Calu3 (cell line): ENCODE measurements at regions of chr12 and their contacts with region 1.

Region 1: DNA sequence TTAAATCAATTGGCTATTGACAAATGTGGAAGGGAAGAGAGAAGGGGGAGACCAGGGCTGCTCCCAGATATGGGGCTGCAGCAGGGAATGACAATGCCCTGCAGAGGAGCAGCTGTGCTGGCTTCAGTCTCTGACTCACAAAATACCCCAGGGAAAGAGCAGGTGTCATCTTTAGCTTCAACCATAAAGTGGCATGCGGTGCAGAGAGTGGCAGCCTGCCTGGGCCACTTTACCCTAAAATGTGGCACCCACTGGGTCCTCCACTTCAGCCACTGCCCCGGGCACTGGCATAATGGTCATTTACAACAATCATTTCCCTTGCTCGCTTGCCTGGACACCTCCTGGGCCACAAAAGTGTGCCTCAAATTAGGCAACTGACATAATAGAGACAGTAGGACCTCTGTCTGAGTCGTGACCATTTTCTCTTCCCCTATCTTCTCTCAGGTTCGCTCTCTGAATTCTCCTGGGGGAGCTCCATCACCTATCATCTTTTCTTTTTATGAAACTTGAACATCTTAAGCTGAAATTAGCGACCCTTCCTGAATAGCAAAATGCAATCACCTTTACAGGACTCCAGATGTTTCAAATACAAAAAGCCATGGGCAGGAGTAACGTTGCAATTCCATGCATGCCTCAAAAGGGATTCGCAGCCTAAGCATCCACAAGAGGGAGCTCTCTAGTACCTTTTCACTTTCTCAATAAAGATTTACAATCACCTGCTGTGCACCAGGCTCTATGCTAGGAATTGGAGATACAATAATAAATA is 179.9 kb upstream of the ATF7IP start:
- DNase-seq: peak; percentile 47
- H3K4me3 Mint-ChIP-seq: no peak overlapping the region
- H3K27ac Mint-ChIP-seq: no peak overlapping the region
- H3K4me1 Mint-ChIP-seq: peaks cover 28% of the 10 kb centered on the region
- H3K27me3 Mint-ChIP-seq: no peaks in the 10 kb centered on the region
- CTCF ChIP-seq: peak; percentile 44

Region 2: GRCh38 chr12:14126692-14127091 is 58.9 kb before region 1 on chr12:
- CTCF ChIA-PET with region 1: no interaction called
- intact Hi-C with region 1: no loop called
- DNase-seq: no peak
- H3K4me3 Mint-ChIP-seq: no peak overlapping the region
- H3K27ac Mint-ChIP-seq: no peak overlapping the region
- H3K4me1 Mint-ChIP-seq: no peaks in the 10 kb centered on the region
- H3K27me3 Mint-ChIP-seq: peaks cover 39% of the 10 kb centered on the region
- CTCF ChIP-seq: no peak

Region 3: GRCh38 chr12:14207905-14208551 is 22.4 kb after region 1 on chr12:
- CTCF ChIA-PET with region 1: interaction called, 3 read pairs
- intact Hi-C with region 1: loop called (anchors 2 kb)
- DNase-seq: peak; percentile 68
- H3K4me3 Mint-ChIP-seq: no peak overlapping the region
- H3K27ac Mint-ChIP-seq: peak overlapping the region; percentile 80
- H3K4me1 Mint-ChIP-seq: peaks cover 23% of the 10 kb centered on the region
- H3K27me3 Mint-ChIP-seq: no peaks in the 10 kb centered on the region
- CTCF ChIP-seq: no peak

Region 4: DNA sequence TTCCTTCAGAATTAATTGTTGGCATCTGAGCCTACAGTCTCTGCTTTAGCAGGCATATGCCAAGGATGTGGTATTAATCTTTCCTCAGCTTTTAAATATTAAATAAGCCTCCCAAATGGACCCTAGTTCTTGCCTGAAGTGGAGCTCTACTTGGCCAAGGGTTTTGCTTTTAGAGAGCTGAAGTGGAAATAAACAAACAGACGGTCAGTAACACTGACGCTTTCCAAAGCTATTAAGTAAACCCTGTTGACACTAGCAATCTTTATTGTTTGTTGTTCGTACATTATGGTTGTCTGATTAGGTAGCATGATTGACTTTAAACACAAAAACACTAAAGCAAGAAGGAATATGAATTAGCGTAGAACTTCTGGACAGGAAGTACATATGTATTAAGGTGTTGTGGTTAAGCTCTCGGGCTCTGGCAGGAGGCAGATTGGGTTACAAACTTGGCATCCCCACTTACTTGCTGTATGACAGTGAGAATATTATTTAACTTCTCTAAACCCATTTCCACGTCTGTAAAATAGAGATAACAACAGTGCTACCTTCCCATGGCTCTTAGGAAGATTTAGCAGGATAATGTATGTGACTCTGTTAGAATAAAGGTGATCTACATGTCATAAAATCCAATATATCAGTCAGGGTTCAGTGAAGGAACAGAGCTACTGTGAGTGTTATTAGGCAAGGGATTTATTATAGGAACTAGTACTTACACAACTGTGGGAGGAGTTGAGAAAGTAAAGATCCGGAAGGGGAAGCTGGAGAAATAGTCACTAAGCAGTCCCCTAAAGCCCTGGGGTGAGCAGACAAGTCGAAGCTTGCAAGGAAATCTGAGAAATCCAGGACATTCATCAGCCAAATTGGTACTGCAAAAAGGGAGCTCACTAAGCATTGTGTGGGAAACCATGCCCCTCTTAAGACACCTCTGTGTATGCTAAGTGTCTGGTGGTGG is 87.6 kb after region 1 on chr12:
- CTCF ChIA-PET with region 1: no interaction called
- intact Hi-C with region 1: no loop called
- DNase-seq: no peak
- H3K4me3 Mint-ChIP-seq: no peak overlapping the region
- H3K27ac Mint-ChIP-seq: no peak overlapping the region
- H3K4me1 Mint-ChIP-seq: peaks cover 6% of the 10 kb centered on the region
- H3K27me3 Mint-ChIP-seq: no peaks in the 10 kb centered on the region
- CTCF ChIP-seq: no peak